Sigmoid colon (tissue), 7 donors: ENCODE measurements at regions of chr14 and their contacts with region 1.

Region 1: GRCh38 chr14:20690848-20691523 is 2.4 kb downstream of the ANG start:
- DNase-seq: no peak
- H3K4me3 ChIP-seq: no peak overlapping the region
- H3K27ac ChIP-seq: no peak overlapping the region
- H3K4me1 ChIP-seq: peaks cover 0 to 23% (median 15%) of the 10 kb centered on the region in 4 donors
- H3K27me3 ChIP-seq: no peaks in the 10 kb centered on the region
- CTCF ChIP-seq: peak in 3 of 4 experiments; percentile 72 to 85 (median 73)
- EP300 ChIP-seq: no peak
- POLR2A ChIP-seq: no peak

Region 2: GRCh38 chr14:20138520-20138919 is 552.5 kb before region 1 on chr14 and contains the start of gene OR4N5:
- intact Hi-C with region 1: no loop called
- DNase-seq: no peak
- H3K4me3 ChIP-seq: no peak within 1 kb of the TSS
- H3K27ac ChIP-seq: no peak within 1 kb of the TSS
- H3K4me1 ChIP-seq: no peaks in the 10 kb centered on the region
- H3K27me3 ChIP-seq: no peaks in the 10 kb centered on the region
- CTCF ChIP-seq: no peak
- EP300 ChIP-seq: no peak
- POLR2A ChIP-seq: no peak
- total RNA-seq, gene OR4N5: not detected

Region 3: GRCh38 chr14:20530771-20531571 is 160.0 kb before region 1 on chr14:
- intact Hi-C with region 1: loop called (anchors 2 kb)
- DNase-seq: peak; percentile 82
- H3K4me3 ChIP-seq: no peak overlapping the region
- H3K27ac ChIP-seq: no peak overlapping the region
- H3K4me1 ChIP-seq: no peaks in the 10 kb centered on the region
- H3K27me3 ChIP-seq: no peaks in the 10 kb centered on the region
- CTCF ChIP-seq: peak; percentile 9 to 69 (median 34)
- EP300 ChIP-seq: no peak
- POLR2A ChIP-seq: no peak

Region 4: DNA sequence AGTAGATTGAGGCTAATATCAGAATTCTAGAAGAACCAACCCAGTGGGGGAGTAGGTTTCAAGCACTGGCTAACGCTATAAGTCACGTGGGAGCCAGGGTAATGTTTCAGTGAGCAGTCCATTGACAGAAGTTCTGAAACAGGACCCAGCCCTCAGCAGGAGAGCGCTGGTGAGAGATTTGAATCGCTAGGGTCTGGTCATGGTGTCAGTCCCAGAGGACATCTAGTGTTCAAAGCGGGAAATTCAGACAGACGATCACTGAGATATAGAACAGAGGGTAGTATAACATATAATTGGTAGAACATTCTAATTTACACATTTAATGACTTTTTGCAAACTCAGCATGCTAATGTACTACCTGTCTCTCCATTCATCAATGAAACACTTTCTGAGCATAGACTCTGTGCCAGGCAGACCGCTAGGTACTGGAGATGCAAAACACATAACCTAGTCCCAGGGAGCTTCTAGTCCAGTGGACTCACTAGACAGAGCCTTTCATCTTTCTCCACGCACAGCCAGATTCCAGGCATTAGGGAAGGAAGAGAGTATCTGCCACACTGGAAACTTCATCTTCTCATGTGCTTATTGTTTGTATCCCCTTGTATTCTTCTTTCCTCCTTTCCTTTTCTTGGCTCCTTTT is 164.8 kb after region 1 on chr14:
- intact Hi-C with region 1: loop called (anchors 10 kb)
- DNase-seq: no peak
- H3K4me3 ChIP-seq: no peak overlapping the region
- H3K27ac ChIP-seq: no peak overlapping the region
- H3K4me1 ChIP-seq: peaks cover 0 to 6% (median 2%) of the 10 kb centered on the region in 4 donors
- H3K27me3 ChIP-seq: peaks cover 0 to 8% (median 7%) of the 10 kb centered on the region in 3 donors
- CTCF ChIP-seq: peak; percentile 26 to 55 (median 49)
- EP300 ChIP-seq: no peak
- POLR2A ChIP-seq: no peak